Panc1 (cell line): ENCODE measurements at regions of chr1 and their contacts with region 1.

Region 1: GRCh38 chr1:173903827-173904531 is 13.1 kb downstream of the SERPINC1 start:
- DNase-seq: no peak
- ATAC-seq: no peak
- H3K4me3 ChIP-seq: no peak overlapping the region
- H3K27ac ChIP-seq: no peak overlapping the region
- H3K4me1 ChIP-seq: no peaks in the 10 kb centered on the region
- H3K27me3 ChIP-seq: no peaks in the 10 kb centered on the region
- CTCF ChIP-seq: no peak

Region 2: GRCh38 chr1:173798078-173798477 is 105.9 kb before region 1 on chr1:
- CTCF ChIA-PET with region 1: no interaction called
- POLR2A ChIA-PET with region 1: no interaction called
- in situ Hi-C with region 1: no loop called
- intact Hi-C with region 1: no loop called
- DNase-seq: no peak
- ATAC-seq: no peak
- H3K4me3 ChIP-seq: no peak overlapping the region
- H3K27ac ChIP-seq: no peak overlapping the region
- H3K4me1 ChIP-seq: no peaks in the 10 kb centered on the region
- H3K27me3 ChIP-seq: no peaks in the 10 kb centered on the region
- CTCF ChIP-seq: no peak

Region 3: GRCh38 chr1:173917635-173918493 is 13.9 kb after region 1 on chr1:
- CTCF ChIA-PET with region 1: no interaction called
- POLR2A ChIA-PET with region 1: interaction called, 20 read pairs
- in situ Hi-C with region 1: no loop called
- intact Hi-C with region 1: no loop called
- DNase-seq: no peak
- ATAC-seq: no peak
- H3K4me3 ChIP-seq: no peak overlapping the region
- H3K27ac ChIP-seq: no peak overlapping the region
- H3K4me1 ChIP-seq: no peaks in the 10 kb centered on the region
- H3K27me3 ChIP-seq: no peaks in the 10 kb centered on the region; the same call in 1 of the 2 replicates
- CTCF ChIP-seq: no peak

Region 4: DNA sequence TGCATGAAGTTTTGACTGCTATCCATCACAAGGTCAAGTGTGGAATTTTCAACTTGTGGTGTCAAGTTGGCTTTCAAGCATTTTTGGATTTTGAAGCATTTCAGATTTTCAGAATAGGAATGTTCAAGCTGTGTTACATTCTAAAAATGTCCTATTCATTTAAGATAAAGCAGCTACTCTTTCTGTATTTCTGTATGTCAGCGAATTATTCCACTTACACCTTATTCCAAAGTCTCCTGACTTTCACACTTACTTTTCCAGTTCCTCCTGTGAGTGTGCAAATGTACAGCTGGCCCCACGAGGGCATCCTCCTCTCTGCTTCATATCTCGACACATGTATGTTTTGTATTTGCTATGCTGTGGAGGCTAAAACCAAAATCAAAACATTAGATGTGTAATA is 66.3 kb after region 1 on chr1:
- CTCF ChIA-PET with region 1: no interaction called
- POLR2A ChIA-PET with region 1: no interaction called
- in situ Hi-C with region 1: no loop called
- intact Hi-C with region 1: no loop called
- DNase-seq: no peak
- ATAC-seq: no peak
- H3K4me3 ChIP-seq: no peak overlapping the region
- H3K27ac ChIP-seq: no peak overlapping the region
- H3K4me1 ChIP-seq: no peaks in the 10 kb centered on the region
- H3K27me3 ChIP-seq: no peaks in the 10 kb centered on the region
- CTCF ChIP-seq: no peak

Region 5: GRCh38 chr1:174174461-174175329 is 270.7 kb after region 1 on chr1:
- CTCF ChIA-PET with region 1: no interaction called
- POLR2A ChIA-PET with region 1: no interaction called
- in situ Hi-C with region 1: no loop called
- intact Hi-C with region 1: no loop called
- DNase-seq: no peak
- ATAC-seq: no peak
- H3K4me3 ChIP-seq: no peak overlapping the region
- H3K27ac ChIP-seq: no peak overlapping the region
- H3K4me1 ChIP-seq: no peaks in the 10 kb centered on the region
- H3K27me3 ChIP-seq: no peaks in the 10 kb centered on the region
- CTCF ChIP-seq: no peak